ENCODE measurements at regions of chr11 and their contacts with region 1.

Region 1: DNA sequence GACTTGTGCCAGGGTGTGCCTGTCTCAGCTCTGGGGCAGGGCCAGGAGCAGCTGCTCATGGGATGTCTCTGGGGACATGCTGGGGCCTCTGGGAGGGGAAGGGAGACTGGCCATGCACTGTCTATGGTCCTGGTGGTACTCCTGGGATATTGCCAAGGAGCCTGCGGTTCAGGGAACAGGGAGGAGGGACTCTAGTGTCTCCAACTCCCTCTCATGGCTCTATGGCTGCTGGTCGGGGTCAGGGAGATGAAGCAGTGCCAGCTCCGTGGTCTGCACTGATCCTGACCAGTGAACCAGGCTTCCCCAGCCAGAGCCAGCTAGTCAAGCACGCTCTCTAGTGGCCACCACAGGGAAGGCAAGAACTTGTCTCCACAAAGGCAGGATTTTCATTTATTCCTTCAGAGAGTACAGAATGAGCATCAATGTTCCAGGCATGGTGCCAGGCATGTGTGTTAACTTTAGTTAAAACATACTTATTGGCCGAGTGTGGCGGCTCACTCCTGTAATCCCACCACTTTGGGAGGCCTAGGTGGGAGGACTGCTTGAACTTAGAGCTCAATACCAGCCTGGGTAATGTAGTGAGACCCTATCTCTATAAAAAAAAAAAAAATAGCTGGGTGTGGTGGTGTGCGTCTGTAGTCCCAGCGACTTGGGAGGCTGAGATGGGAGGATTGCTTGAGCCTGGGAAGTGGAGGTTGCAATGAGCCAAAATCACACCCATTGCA is 2.5 kb upstream of the BEST1 start:
- DNase-seq: peak; percentile 86
- H3K4me3 Mint-ChIP-seq: no peak overlapping the region
- H3K27ac Mint-ChIP-seq: no peak overlapping the region
- H3K4me1 Mint-ChIP-seq: peaks cover 7% of the 10 kb centered on the region
- H3K27me3 Mint-ChIP-seq: no peaks in the 10 kb centered on the region

Region 2: GRCh38 chr11:61747192-61747966 is 200.3 kb before region 1 on chr11:
- CTCF ChIA-PET with region 1: interaction called, 3 read pairs
- intact Hi-C with region 1: loop called (anchors 5 kb)
- DNase-seq: peak; percentile 57
- H3K4me3 Mint-ChIP-seq: no peak overlapping the region
- H3K27ac Mint-ChIP-seq: no peak overlapping the region
- H3K4me1 Mint-ChIP-seq: peaks cover 4% of the 10 kb centered on the region
- H3K27me3 Mint-ChIP-seq: peaks cover 21% of the 10 kb centered on the region

Region 3: GRCh38 chr11:61871158-61871597 is 76.5 kb before region 1 on chr11:
- CTCF ChIA-PET with region 1: interaction called, 16 read pairs
- intact Hi-C with region 1: loop called (anchors 1 kb)
- DNase-seq: peak; percentile 75
- H3K4me3 Mint-ChIP-seq: no peak overlapping the region
- H3K27ac Mint-ChIP-seq: no peak overlapping the region
- H3K4me1 Mint-ChIP-seq: peaks cover 2% of the 10 kb centered on the region
- H3K27me3 Mint-ChIP-seq: no peaks in the 10 kb centered on the region

Region 4: DNA sequence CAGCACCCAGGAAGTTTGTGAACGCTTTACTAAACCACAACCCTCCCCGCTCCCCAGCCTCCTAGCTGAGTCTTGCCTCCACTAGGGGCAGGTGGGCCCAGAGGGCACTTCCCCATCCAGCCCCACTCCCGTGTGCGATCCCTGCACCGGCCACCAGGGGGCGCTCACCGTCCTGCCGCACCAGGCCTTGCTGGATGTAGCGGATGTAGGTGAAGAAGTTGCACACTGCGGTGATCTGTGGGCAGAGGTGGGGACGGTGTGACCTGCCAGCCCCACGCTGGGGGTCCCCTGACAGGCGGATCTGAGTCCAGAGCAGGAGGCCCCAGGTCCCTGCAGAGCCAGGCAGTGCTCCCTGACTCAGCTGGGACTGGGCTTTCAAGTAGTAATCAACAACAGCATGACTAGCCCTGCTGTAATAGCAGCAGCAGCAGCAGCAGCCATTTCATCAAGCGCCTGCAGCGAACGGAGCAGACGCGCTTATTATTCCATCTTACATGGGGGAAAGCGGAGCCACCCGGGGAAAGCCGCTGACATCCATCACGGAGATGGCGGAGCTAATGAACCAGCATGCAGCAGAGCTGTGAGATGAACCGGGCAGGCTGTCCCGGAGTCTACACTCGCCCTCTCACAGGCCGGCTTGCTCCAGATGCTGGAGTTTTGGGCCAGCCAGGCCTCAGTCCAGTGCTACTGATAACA is 48.4 kb before region 1 on chr11:
- CTCF ChIA-PET with region 1: interaction called, 132 read pairs
- intact Hi-C with region 1: loop called (anchors 1 kb)
- DNase-seq: peak; percentile 93
- H3K4me3 Mint-ChIP-seq: no peak overlapping the region
- H3K27ac Mint-ChIP-seq: no peak overlapping the region
- H3K4me1 Mint-ChIP-seq: peaks cover 4% of the 10 kb centered on the region
- H3K27me3 Mint-ChIP-seq: no peaks in the 10 kb centered on the region

Region 5: DNA sequence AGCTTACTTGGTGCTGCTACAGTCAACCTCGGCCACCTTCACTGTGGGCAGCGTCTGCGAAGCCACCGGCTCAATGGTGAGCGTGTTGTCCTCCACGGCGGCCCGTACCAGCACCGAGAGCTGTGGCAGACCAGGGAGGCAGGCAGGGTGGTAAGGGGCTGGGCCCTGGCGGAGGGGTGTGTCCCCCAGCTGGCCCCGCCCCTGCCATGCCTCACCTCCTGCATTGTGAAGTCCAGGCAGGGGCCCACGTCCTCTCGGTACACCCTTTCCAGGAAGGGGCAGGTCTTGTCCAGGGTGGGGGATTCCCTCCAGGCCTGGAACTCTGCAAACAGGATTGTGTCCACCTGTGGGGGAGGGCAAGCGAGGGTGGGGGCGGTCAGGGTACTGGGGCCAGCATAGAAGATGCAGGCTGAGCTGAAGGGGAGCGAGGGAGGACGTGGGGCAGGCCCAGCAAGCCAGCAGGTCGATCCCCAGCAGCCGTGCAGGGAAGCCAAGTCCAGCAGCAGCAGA is 43.1 kb before region 1 on chr11:
- CTCF ChIA-PET with region 1: interaction called, 132 read pairs
- intact Hi-C with region 1: loop called (anchors 1 kb)
- DNase-seq: peak; percentile 32
- H3K4me3 Mint-ChIP-seq: no peak overlapping the region
- H3K27ac Mint-ChIP-seq: no peak overlapping the region
- H3K4me1 Mint-ChIP-seq: no peaks in the 10 kb centered on the region
- H3K27me3 Mint-ChIP-seq: no peaks in the 10 kb centered on the region

Region 6: GRCh38 chr11:61917341-61918109 is 30.1 kb before region 1 on chr11 and contains the start of gene RAB3IL1:
- CTCF ChIA-PET with region 1: interaction called, 14 read pairs
- intact Hi-C with region 1: no loop called
- DNase-seq: peak; percentile 63
- H3K4me3 Mint-ChIP-seq: peak within 1 kb of the TSS; percentile 78
- H3K27ac Mint-ChIP-seq: no peak within 1 kb of the TSS
- H3K4me1 Mint-ChIP-seq: peaks cover 10% of the 10 kb centered on the region
- H3K27me3 Mint-ChIP-seq: peaks cover 44% of the 10 kb centered on the region
- total RNA-seq, gene RAB3IL1: 0.52 to 0.74 TPM

Region 7: GRCh38 chr11:61928606-61929005 is 19.0 kb before region 1 on chr11:
- CTCF ChIA-PET with region 1: interaction called, 21 read pairs
- intact Hi-C with region 1: no loop called
- DNase-seq: no peak
- H3K4me3 Mint-ChIP-seq: no peak overlapping the region
- H3K27ac Mint-ChIP-seq: no peak overlapping the region
- H3K4me1 Mint-ChIP-seq: no peaks in the 10 kb centered on the region
- H3K27me3 Mint-ChIP-seq: peaks cover 10% of the 10 kb centered on the region